ENCODE measurements at regions of chr15 and their contacts with region 1.

Region 1: GRCh38 chr15:74620636-74621545 is 5.3 kb downstream of the CLK3 start:
- DNase-seq: peak; percentile 64 to 76
- ATAC-seq: peak; percentile 68

Region 2: DNA sequence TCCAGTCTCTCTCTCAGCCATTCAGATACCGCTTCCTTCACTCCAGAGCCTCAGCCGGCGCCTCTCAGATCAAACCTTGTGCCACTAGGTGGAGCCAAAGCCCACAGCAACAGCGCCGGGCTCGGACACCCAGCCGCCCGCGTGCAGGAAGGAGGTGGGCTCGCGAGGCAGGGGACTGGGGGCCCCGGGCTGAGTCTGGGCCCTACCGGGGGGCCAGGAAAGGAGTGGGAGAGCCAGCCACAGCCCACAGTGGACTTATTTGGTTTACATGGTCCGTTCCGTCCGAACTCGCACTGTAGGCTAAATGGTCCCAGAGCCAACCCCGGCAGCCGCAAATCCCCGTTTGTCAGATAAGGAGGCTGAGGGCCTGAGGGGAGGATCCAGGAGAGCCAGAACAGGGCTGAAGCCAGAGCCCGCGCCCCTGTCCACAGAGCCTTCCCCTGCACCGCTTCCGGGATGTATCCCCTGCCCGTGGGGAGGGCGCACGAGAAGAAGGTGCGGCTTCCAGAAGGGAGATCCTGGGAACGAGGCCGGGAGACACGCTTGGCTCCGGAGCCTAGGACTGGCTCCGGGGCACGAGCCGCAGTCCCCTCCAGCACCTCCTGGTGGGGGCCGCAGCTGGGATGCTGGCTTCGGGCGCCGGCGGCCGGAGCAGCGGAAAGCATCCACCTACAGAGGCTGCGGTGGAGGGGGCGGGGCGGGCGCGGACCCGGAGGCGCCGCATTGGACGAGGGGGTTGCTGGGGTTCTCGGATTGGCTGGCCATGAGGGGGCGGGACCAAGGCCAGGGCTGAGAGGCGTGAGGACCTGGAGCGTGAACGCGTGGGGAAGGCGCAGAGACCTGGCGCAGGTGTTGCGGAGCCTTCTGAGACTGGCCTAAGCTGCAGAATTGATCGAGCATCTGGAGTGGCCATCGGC is 246.9 kb before region 1 on chr15:
- intact Hi-C with region 1: loop called in 1 of 2 experiments (anchors 10 kb)
- DNase-seq: peak; percentile 92 to 97
- ATAC-seq: peak; percentile 99